Heart right ventricle (tissue), 16 donors: ENCODE measurements at regions of chr21 and their contacts with region 1.

Region 1: DNA sequence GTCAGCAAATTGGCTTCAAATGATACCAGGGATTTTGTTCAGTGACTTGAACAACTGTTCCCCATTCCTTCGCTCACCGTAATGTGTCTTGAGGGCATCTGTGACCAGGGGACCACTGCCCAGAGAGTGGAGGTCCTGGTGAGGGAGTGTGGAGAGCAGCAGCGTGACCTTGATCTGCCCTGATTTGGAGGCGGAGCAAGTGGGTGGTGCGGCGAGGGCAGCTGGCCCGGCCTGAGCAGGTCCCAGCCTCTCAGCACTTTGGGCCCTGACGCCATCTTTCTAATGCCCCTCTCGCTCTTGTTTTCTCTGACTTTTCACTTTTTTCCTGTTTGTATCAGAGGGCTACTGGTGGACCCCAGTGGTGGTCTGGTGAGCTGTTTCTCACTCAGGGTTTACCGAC is 31.1 kb downstream of the DIP2A start:
- DNase-seq: no peak
- ATAC-seq: peak in 5 of 8 donors; percentile 62 to 75 (median 65)
- H3K4me3 ChIP-seq: no peak overlapping the region
- H3K27ac ChIP-seq: no peak overlapping the region
- H3K4me1 ChIP-seq: peaks cover 0 to 23% (median 5%) of the 10 kb centered on the region in 9 donors
- H3K27me3 ChIP-seq: no peaks in the 10 kb centered on the region
- CTCF ChIP-seq: no peak

Region 2: DNA sequence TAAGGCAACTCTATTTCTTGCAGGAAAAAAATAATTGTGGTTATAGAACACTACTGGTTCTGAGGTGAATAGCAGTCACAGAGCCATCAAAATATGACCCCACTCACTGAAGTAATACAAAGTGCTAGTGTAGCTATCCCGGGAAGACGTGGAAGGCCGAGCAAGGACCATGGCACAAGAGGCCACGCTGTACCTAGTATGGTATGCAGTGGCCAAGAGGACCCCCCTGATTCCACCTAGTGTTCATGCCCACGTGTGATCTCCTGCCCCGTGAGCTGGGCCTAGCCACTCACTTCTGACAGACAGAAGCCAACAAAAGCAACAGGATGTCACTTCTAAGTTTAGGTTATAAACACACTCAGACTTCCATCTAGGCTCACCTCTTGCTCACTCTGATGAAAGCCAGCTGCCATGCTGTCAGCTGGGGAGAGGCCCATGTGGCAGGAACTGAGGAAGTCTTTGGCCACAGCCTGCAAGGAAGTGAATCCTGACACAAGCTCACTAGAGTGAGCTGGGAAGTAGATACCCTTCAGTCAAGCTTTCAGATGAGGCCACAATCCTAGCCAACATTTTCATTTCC is 239.6 kb before region 1 on chr21:
- intact Hi-C with region 1: no loop called
- DNase-seq: no peak
- ATAC-seq: peak in 4 of 8 donors; percentile 19 to 54 (median 32)
- H3K4me3 ChIP-seq: no peak overlapping the region
- H3K27ac ChIP-seq: peak overlapping the region in 2 of 10 donors; percentile 4 to 27
- H3K4me1 ChIP-seq: peaks cover 0 to 19% (median 0%) of the 10 kb centered on the region in 9 donors
- H3K27me3 ChIP-seq: no peaks in the 10 kb centered on the region
- CTCF ChIP-seq: no peak

Region 3: GRCh38 chr21:46442938-46443337 is 46.9 kb before region 1 on chr21:
- intact Hi-C with region 1: loop called in 1 of 10 experiments (anchors 5 kb)
- DNase-seq: no peak
- ATAC-seq: peak in 4 of 8 donors; percentile 12 to 35 (median 18)
- H3K4me3 ChIP-seq: no peak overlapping the region
- H3K27ac ChIP-seq: peak overlapping the region in 5 of 10 donors; percentile 9 to 59 (median 54)
- H3K4me1 ChIP-seq: peaks cover 0 to 17% (median 6%) of the 10 kb centered on the region in 9 donors
- H3K27me3 ChIP-seq: no peaks in the 10 kb centered on the region
- CTCF ChIP-seq: no peak